ENCODE measurements at regions of chr5 and their contacts with region 1.

Region 1: DNA sequence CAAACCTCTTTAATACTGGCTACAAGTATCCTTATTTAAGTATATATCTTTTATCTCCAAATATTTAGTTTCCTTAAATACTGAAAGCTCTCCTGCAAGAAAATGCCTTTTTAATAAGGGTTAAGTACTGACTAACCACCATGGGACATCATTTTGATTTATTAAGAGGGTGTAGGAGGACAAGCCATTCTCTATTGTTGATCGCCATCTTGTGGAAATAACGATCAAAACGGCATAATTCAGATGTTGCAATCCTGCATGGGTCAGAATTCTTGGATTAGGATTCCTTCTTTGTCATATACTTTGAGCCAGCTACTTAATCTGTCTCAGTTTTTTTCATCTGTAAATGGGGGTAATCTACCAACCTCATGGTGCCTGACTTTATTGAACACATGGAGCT is 28.7 kb upstream of the C5orf46 start:
- DNase-seq: peak in 1 of 4 donors; percentile 53
- ATAC-seq: peak; percentile 86
- H3K4me3 ChIP-seq: no peak overlapping the region
- H3K27ac ChIP-seq: no peak overlapping the region
- H3K4me1 ChIP-seq: no peaks in the 10 kb centered on the region
- H3K27me3 ChIP-seq: no peaks in the 10 kb centered on the region
- CTCF ChIP-seq: peak in 6 of 7 experiments; percentile 44 to 89 (median 82)
- POLR2A ChIP-seq: no peak

Region 2: GRCh38 chr5:147628058-147628895 is 306.8 kb before region 1 on chr5:
- intact Hi-C with region 1: loop called (anchors 10 kb)
- DNase-seq: peak; percentile 64 to 78 (median 71)
- ATAC-seq: peak; percentile 94
- H3K4me3 ChIP-seq: no peak overlapping the region
- H3K27ac ChIP-seq: no peak overlapping the region
- H3K4me1 ChIP-seq: peaks cover 15% of the 10 kb centered on the region
- H3K27me3 ChIP-seq: no peaks in the 10 kb centered on the region
- CTCF ChIP-seq: peak; percentile 63 to 90 (median 88)
- POLR2A ChIP-seq: no peak

Region 3: DNA sequence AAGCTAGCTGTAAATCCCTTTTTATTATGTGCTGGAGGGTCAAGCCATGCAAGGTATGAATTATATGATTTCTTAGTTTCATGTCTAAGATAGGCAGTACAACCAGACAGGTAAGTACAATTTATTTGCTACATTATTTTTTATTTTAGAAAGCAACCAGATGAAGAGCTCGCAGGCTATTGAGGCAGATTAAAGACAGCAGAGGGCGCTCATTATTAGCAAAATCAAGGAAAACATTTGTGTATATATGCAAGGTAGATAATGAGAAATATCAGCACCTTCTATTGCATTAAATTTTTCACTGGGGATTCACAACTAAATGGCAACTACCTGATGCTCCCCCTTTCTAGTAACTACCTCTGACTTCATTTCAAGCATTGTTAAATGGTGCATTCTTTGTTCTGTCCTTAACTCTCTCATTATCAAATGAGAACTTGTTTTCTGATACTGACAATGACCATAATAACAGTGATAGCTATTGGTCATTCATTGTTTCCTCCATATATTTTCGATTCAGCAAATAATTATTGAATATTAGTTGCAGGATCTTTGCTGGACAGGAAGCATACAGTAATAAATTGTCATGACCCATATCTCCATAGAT is 47.9 kb before region 1 on chr5:
- intact Hi-C with region 1: loop called (anchors 10 kb)
- DNase-seq: peak; percentile 32 to 57 (median 40)
- ATAC-seq: peak; percentile 68
- H3K4me3 ChIP-seq: no peak overlapping the region
- H3K27ac ChIP-seq: no peak overlapping the region
- H3K4me1 ChIP-seq: no peaks in the 10 kb centered on the region
- H3K27me3 ChIP-seq: no peaks in the 10 kb centered on the region
- CTCF ChIP-seq: peak in 6 of 7 experiments; percentile 59 to 80 (median 76)
- POLR2A ChIP-seq: no peak

Region 4: GRCh38 chr5:148033146-148033545 is 98.1 kb after region 1 on chr5:
- intact Hi-C with region 1: no loop called
- DNase-seq: no peak
- ATAC-seq: no peak
- H3K4me3 ChIP-seq: no peak overlapping the region
- H3K27ac ChIP-seq: no peak overlapping the region
- H3K4me1 ChIP-seq: no peaks in the 10 kb centered on the region
- H3K27me3 ChIP-seq: no peaks in the 10 kb centered on the region
- CTCF ChIP-seq: no peak
- POLR2A ChIP-seq: no peak

Region 5: GRCh38 chr5:148569948-148570347 is 634.9 kb after region 1 on chr5:
- intact Hi-C with region 1: no loop called
- DNase-seq: peak; percentile 15 to 58 (median 44)
- ATAC-seq: peak; percentile 63
- H3K4me3 ChIP-seq: no peak overlapping the region
- H3K27ac ChIP-seq: no peak overlapping the region
- H3K4me1 ChIP-seq: peaks cover 12% of the 10 kb centered on the region
- H3K27me3 ChIP-seq: no peaks in the 10 kb centered on the region
- CTCF ChIP-seq: no peak
- POLR2A ChIP-seq: no peak

Measured in body of pancreas (tissue), 4 donors.